ENCODE measurements at regions of chr17 and their contacts with region 1.

Region 1: GRCh38 chr17:75393523-75394331 is 11.8 kb downstream of the GRB2 start:
- DNase-seq: peak; percentile 90
- ATAC-seq: peak; percentile 90
- H3K4me3 Mint-ChIP-seq: peak overlapping the region; percentile 96
- H3K27ac Mint-ChIP-seq: peak overlapping the region; percentile 78
- H3K4me1 Mint-ChIP-seq: peaks cover 72% of the 10 kb centered on the region
- H3K27me3 Mint-ChIP-seq: no peaks in the 10 kb centered on the region
- CTCF ChIP-seq: no peak

Region 2: DNA sequence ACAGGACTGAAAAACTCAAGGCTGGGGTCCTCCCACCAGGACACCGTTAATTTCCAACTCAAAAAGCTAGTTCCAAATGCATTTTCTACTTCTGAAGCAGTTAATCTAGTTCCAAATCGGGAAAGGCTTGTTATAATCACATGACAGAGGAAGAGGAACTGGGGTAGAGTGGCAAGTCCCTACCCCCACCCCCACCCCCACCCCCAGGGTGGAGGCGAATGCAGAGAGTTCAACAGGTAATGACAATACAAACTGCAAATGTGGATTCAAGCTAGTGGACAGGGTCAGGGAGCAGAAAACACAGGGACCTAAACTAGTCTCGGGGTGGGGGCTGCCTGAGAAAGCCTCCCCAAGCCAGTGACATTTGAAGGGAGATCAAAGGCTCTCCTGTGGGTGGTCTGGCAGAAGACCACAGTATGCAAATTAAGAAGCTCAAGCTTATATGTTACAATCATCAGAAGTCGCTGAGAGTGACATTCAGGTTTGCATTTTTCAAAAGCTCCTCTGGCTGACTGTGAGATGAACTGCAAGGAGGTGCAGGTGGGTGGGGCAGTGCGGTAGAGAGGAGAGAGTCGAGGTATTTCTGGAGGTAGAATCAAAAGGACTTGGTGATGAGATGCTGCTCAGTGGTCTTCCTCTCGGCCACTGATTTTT is 48.1 kb before region 1 on chr17:
- CTCF ChIA-PET with region 1: interaction called, 12 read pairs
- POLR2A ChIA-PET with region 1: interaction called, 8 read pairs
- intact Hi-C with region 1: no loop called
- DNase-seq: peak; percentile 84
- ATAC-seq: peak; percentile 78
- H3K4me3 Mint-ChIP-seq: peak overlapping the region; percentile 69
- H3K27ac Mint-ChIP-seq: peak overlapping the region; percentile 87
- H3K4me1 Mint-ChIP-seq: peaks cover 88% of the 10 kb centered on the region
- H3K27me3 Mint-ChIP-seq: no peaks in the 10 kb centered on the region
- CTCF ChIP-seq: no peak

Region 3: DNA sequence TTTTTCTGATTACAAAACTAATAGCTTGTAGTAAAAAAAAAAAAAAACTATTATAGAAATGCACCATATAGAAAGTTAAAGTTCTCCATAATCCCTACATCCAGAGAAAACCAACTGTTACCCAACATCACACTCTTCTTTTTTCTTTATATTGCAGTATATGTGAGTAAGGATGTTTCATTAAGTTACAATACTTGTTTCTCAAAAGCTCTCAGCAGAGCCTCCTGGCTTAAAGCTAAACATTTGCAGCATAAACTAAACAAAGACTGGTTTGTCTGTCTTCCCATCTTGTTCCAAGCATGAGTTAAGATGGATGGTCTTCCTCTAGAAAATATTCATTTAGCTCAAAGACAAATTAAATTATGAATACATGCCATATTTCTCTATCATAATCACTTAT is 13.4 kb before region 1 on chr17:
- CTCF ChIA-PET with region 1: interaction called, 34 read pairs
- POLR2A ChIA-PET with region 1: interaction called, 4 read pairs
- intact Hi-C with region 1: no loop called
- DNase-seq: no peak
- ATAC-seq: no peak
- H3K4me3 Mint-ChIP-seq: no peak overlapping the region
- H3K27ac Mint-ChIP-seq: no peak overlapping the region
- H3K4me1 Mint-ChIP-seq: peaks cover 45% of the 10 kb centered on the region
- H3K27me3 Mint-ChIP-seq: no peaks in the 10 kb centered on the region
- CTCF ChIP-seq: no peak

Region 4: GRCh38 chr17:75405365-75406221 is 11.9 kb after region 1 on chr17 and contains the start of gene GRB2:
- CTCF ChIA-PET with region 1: interaction called, 12 read pairs
- POLR2A ChIA-PET with region 1: interaction called, 8 read pairs
- intact Hi-C with region 1: no loop called
- DNase-seq: peak; percentile 99
- ATAC-seq: peak; percentile 88
- H3K4me3 Mint-ChIP-seq: peak within 1 kb of the TSS; percentile 99
- H3K27ac Mint-ChIP-seq: peak within 1 kb of the TSS; percentile 99
- H3K4me1 Mint-ChIP-seq: peaks cover 34% of the 10 kb centered on the region
- H3K27me3 Mint-ChIP-seq: no peaks in the 10 kb centered on the region
- CTCF ChIP-seq: no peak
- total RNA-seq, gene GRB2: 167 to 179 TPM